PC-9 (cell line): ENCODE measurements at regions of chr16 and their contacts with region 1.

Region 1: DNA sequence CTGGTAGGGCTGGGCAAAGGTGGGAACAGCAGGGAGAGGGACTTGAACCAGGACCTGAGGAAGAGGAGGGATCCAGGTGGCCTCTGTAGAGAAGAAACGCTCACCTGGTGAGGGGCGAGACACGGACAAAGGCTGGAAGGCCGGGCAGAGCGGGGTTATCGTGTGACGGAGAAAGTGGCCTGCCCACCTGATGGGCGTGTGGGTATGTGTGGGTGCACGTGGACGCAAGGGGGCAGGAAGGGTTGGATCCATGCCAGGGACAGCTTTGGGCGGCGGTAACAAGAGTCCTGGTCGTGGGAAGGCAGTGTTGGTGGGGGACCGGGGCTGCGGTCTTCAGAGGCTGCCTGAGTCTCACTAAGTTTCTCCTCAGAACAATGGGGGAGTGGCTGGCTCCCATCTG is 104.1 kb upstream of the GSE1 start:
- DNase-seq: no peak
- H3K4me3 ChIP-seq: no peak overlapping the region
- H3K27ac ChIP-seq: no peak overlapping the region
- H3K4me1 ChIP-seq: peaks cover 14% of the 10 kb centered on the region
- H3K27me3 ChIP-seq: no peaks in the 10 kb centered on the region
- CTCF ChIP-seq: no peak

Region 2: DNA sequence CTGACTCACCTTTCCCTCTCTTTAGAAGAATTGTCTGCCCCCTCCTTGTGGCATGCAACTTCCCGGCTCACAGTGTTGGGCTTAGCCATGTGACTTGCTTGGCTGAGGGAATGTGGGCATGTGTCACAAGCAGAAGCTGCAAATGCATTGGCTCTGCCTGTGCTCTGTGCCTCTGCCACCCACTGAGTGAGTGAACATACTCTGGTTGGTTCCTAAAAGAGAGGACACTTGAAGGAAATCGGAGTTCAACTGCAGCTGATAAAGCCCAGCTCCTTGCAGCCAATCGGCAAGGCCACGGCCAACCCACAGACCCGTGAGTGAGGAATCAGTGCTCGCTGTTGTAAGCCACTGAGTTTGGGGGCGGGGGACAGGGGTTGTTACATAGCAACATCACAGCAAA is 190.6 kb after region 1 on chr16:
- CTCF ChIA-PET with region 1: interaction called, 12 read pairs
- POLR2A ChIA-PET with region 1: no interaction called
- intact Hi-C with region 1: no loop called
- DNase-seq: no peak
- H3K4me3 ChIP-seq: no peak overlapping the region
- H3K27ac ChIP-seq: no peak overlapping the region
- H3K4me1 ChIP-seq: no peaks in the 10 kb centered on the region
- H3K27me3 ChIP-seq: no peaks in the 10 kb centered on the region
- CTCF ChIP-seq: no peak